Right ventricle myocardium superior (tissue), 1 donor: ENCODE measurements at regions of chr4 and their contacts with region 1.

Region 1: GRCh38 chr4:56799824-56800756 is 21.4 kb downstream of the SPINK2 start:
- DNase-seq: peak; percentile 89
- ATAC-seq: peak; percentile 100

Region 2: GRCh38 chr4:56575820-56576429 is 224.2 kb before region 1 on chr4:
- intact Hi-C with region 1: loop called (anchors 5 kb)
- DNase-seq: no peak
- ATAC-seq: no peak